Activated CD4-positive, alpha-beta memory T cell treated with anti-CD3 and anti-CD28 coated beads for 36 hours (primary cell): ENCODE measurements at regions of chr3 and their contacts with region 1.

Region 1: DNA sequence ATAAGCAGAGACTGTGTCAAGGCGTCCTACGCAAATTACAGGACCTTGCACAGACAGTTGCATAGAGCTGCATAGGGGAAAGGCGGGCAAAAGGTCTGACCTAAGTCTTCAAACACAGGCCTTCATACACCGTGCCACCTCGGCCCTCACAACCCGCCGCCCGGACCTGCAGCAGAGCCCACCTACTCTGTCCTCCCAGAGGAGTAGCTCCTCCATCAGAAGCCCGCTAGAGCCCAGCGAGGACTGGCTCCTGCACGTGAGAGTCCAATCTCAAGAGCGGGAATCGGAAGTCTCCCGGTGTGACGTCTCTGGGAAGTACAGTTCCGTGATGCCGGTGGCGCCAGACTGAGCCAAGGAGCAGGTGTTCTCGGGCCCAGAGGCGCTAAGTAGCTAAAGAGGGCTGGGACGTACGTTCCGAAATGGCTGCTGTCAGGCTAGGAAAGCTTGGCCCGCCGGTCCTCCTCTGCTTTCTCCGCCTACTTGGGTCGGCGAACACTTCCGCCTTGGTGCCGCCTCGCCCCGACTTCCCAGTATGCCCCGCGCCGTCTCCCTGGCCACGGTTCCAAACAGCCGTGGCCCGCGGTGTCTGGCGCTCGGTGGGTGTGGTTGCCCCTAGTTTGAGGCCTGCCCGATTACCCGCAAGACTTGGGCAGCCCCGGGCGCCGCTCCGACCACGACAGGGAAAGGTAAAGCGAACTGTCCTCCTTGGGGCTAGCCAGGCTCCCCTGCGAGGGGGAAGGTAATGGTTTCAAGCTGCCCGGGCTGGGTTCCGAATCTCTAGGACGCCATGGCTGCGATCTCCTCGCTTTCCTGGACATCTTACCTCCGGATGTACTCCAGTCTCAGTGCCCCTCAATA is at the starts of genes ASTE1 and NEK11:
- DNase-seq: peak; percentile 94
- H3K4me3 Mint-ChIP-seq: peak within 1 kb of the TSS; percentile 84
- H3K27ac Mint-ChIP-seq: peak within 1 kb of the TSS; percentile 90
- H3K4me1 Mint-ChIP-seq: peaks cover 41% of the 10 kb centered on the region
- H3K27me3 Mint-ChIP-seq: no peaks in the 10 kb centered on the region
- total RNA-seq, gene ASTE1: 7.8 to 10.1 TPM
- total RNA-seq, gene NEK11: 1.2 to 1.3 TPM

Region 2: DNA sequence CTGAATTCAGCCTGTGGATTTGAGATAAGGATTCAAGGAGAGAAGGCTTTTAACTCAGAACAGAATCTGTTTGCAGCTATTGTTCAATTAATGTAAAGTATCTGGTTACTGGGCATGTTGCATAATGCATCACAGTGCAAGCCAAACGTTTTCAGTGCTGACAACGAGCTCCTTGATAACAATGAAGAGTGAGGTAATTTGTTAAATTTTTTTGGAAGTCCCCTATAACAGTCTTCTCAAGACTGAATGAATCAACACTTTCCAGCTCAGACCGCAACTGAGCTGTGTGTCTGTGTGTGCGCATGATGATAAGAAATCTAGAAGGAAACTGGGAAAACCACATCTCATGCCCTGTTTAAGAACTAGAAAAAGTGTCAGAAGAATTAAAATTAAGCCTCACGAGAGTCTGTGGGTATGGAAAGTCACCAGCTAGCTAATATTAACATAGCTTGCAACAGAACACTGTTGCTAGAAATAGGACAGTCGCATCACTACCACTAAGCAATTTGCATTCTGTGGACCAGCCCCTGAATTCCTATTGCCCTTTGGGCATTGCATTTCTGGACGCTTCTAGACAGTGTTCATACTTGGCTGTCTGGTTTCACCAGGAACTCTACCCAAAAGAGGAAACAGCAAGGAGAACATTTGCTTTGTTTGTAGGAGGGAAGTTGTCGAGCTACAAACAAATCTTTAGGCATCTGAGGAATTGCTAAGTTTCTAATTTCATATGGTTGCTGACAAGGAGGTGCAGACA is 176.3 kb before region 1 on chr3:
- CTCF ChIA-PET with region 1: no interaction called
- POLR2A ChIA-PET with region 1: no interaction called
- intact Hi-C with region 1: loop called (anchors 5 kb)
- DNase-seq: peak; percentile 76
- H3K4me3 Mint-ChIP-seq: peak overlapping the region; percentile 21
- H3K27ac Mint-ChIP-seq: peak overlapping the region; percentile 57
- H3K4me1 Mint-ChIP-seq: peaks cover 28% of the 10 kb centered on the region
- H3K27me3 Mint-ChIP-seq: peaks cover 36% of the 10 kb centered on the region

Region 3: DNA sequence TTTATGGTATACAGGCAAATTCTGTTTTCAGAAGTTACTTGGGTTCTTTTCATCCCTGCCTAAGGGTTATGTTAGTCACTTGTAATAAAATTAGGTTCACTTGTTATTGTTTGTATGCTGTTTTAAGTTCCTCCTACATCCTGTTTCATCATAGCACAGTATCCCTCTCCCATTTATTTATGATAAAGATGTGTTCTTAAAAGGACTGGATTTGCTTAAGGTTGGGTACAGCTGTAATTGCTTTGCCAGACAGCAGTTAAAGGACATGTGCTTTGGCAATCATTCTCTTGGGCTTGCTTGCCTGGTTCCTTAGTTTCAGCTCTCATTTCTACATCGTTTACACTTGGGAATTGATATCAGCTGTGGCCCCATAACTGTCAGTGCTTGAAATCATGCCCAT is 121.0 kb before region 1 on chr3:
- CTCF ChIA-PET with region 1: no interaction called
- POLR2A ChIA-PET with region 1: interaction called, 3 read pairs
- intact Hi-C with region 1: loop called (anchors 5 kb)
- DNase-seq: no peak
- H3K4me3 Mint-ChIP-seq: no peak overlapping the region
- H3K27ac Mint-ChIP-seq: no peak overlapping the region
- H3K4me1 Mint-ChIP-seq: peaks cover 55% of the 10 kb centered on the region
- H3K27me3 Mint-ChIP-seq: no peaks in the 10 kb centered on the region

Region 4: GRCh38 chr3:131001071-131001470 is 25.5 kb before region 1 on chr3:
- CTCF ChIA-PET with region 1: no interaction called
- POLR2A ChIA-PET with region 1: no interaction called
- intact Hi-C with region 1: no loop called
- DNase-seq: no peak
- H3K4me3 Mint-ChIP-seq: no peak overlapping the region
- H3K27ac Mint-ChIP-seq: no peak overlapping the region
- H3K4me1 Mint-ChIP-seq: no peaks in the 10 kb centered on the region
- H3K27me3 Mint-ChIP-seq: no peaks in the 10 kb centered on the region

Region 5: GRCh38 chr3:131381444-131382291 is 355.1 kb after region 1 on chr3 and contains the start of gene NUDT16:
- CTCF ChIA-PET with region 1: no interaction called
- POLR2A ChIA-PET with region 1: interaction called, 3 read pairs
- intact Hi-C with region 1: loop called (anchors 2 kb)
- DNase-seq: peak; percentile 99
- H3K4me3 Mint-ChIP-seq: peak within 1 kb of the TSS; percentile 93
- H3K27ac Mint-ChIP-seq: peak within 1 kb of the TSS; percentile 84
- H3K4me1 Mint-ChIP-seq: peaks cover 22% of the 10 kb centered on the region
- H3K27me3 Mint-ChIP-seq: no peaks in the 10 kb centered on the region
- total RNA-seq, gene NUDT16: 7.4 to 8.6 TPM

Region 6: GRCh38 chr3:131502530-131503245 is 476.1 kb after region 1 on chr3 and contains the start of gene MRPL3:
- CTCF ChIA-PET with region 1: no interaction called
- POLR2A ChIA-PET with region 1: no interaction called
- intact Hi-C with region 1: loop called (anchors 2 kb)
- DNase-seq: peak; percentile 91
- H3K4me3 Mint-ChIP-seq: peak within 1 kb of the TSS; percentile 99
- H3K27ac Mint-ChIP-seq: peak within 1 kb of the TSS; percentile 90
- H3K4me1 Mint-ChIP-seq: peaks cover 32% of the 10 kb centered on the region
- H3K27me3 Mint-ChIP-seq: no peaks in the 10 kb centered on the region
- total RNA-seq, gene MRPL3: 145 to 146 TPM